ENCODE measurements at regions of chr15 and their contacts with region 1.

Region 1: GRCh38 chr15:67914537-67915460 is 75.0 kb upstream of the RNU6-1 start:
- DNase-seq: peak; percentile 77 to 81
- ATAC-seq: peak; percentile 76
- H3K4me3 ChIP-seq: no peak overlapping the region
- H3K27ac ChIP-seq: peak overlapping the region; percentile 61 to 72
- H3K4me1 ChIP-seq: peaks cover 10 to 12% of the 10 kb centered on the region in 2 donors
- H3K27me3 ChIP-seq: no peaks in the 10 kb centered on the region

Region 2: DNA sequence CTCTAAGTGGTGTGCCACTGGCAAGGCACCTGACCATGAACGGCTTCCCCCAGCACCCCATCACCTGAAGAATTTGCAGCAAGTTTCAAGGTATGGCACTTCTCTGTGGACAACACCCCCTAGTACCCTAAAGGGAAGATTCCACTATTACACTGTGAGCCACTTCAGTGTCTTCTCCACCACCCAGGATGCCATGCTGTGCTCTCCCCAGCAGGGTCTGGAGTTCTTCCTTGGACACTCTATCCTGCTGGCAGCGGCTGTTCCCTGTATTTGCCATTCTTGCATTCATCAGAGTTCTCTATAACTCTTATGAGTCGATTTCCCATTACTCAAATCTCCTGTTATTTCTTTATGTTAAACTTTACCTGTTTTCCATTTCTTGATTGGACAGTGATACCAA is 41.0 kb before region 1 on chr15:
- intact Hi-C with region 1: no loop called
- DNase-seq: no peak
- ATAC-seq: no peak
- H3K4me3 ChIP-seq: no peak overlapping the region
- H3K27ac ChIP-seq: no peak overlapping the region
- H3K4me1 ChIP-seq: no peaks in the 10 kb centered on the region
- H3K27me3 ChIP-seq: no peaks in the 10 kb centered on the region

Region 3: DNA sequence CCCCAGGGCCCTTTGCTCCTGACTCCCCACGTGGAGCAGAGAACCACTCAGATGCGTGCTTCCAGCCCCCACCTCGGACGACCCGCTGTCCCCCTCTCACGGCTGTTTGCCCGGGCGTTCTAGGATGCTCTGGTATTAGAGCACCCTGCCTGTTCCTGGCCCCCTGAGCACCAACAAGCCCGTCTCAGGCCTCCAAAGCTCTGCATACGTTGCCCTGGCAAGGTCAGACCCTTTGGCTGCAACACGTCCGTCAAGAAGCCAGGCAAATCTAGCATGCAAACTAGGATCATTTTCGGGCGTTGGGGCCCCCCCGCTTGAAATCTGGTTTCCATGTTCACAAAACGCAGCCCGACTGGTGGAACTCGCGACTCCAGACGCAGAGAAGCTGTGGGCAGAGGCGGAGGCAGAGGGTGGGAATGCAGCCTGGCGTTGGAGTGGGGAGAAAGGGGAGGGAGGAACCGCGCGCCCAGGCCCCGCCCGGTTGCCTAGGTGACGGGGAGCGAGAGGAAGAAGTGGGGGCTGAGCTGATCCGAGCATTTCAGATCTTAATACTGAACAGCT is 53.2 kb after region 1 on chr15:
- intact Hi-C with region 1: loop called in 1 of 2 experiments (anchors 5 kb)
- DNase-seq: peak; percentile 89 to 93
- ATAC-seq: peak; percentile 94
- H3K4me3 ChIP-seq: peak overlapping the region in 1 of 2 donors; percentile 23
- H3K27ac ChIP-seq: no peak overlapping the region
- H3K4me1 ChIP-seq: no peaks in the 10 kb centered on the region
- H3K27me3 ChIP-seq: no peaks in the 10 kb centered on the region

Region 4: GRCh38 chr15:68042156-68042854 is 127.5 kb after region 1 on chr15:
- intact Hi-C with region 1: no loop called
- DNase-seq: no peak
- ATAC-seq: no peak
- H3K4me3 ChIP-seq: no peak overlapping the region
- H3K27ac ChIP-seq: no peak overlapping the region
- H3K4me1 ChIP-seq: no peaks in the 10 kb centered on the region
- H3K27me3 ChIP-seq: no peaks in the 10 kb centered on the region

Measured in aorta (tissue), 5 donors.